Activated T-helper 1 cell treated with anti-CD3 and anti-CD28 coated beads, Interleukin-12 subunit alpha, Interleukin-12 subunit beta, Interleukin-2, Interleukin-4 antibody, amounts not matched to agents 30 ng/mL and 10 ng/mL and 1 ng/mL, durations not matched to agents 14 hours and 24 hours and 36 hours (primary cell): ENCODE measurements at regions of chr12 and their contacts with region 1.

Region 1: DNA sequence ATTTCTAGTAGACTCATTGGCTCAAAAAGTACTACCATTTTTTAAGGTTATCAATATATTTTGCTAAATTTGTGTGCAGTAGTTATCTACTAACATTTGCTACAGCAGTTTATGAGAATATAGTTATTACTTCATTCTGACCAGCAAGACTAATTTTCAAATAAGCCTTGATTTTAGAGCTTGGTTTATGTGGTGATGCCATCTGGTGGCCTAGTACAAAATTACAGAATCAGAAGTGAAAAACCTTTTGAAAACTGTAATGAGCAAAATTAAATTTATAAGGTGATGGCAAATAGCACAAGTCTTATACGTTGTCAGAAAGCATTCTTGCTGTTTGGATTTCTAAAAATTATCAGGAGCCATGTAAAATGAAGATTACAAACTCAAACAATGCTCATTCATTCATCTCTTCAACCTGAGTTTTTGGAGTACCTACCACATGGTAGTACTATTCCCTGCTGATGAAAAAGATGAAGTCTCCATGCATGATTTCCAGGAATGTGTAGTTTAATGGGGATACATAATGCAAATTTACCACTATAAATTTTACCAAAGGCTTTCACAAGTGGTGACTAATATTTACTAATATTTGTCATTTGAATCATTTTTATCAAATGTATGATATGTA is 51.0 kb downstream of the MAGOHB start:
- DNase-seq: no peak
- H3K4me3 Mint-ChIP-seq: no peak overlapping the region
- H3K27ac Mint-ChIP-seq: no peak overlapping the region
- H3K4me1 Mint-ChIP-seq: peaks cover 4% of the 10 kb centered on the region
- H3K27me3 Mint-ChIP-seq: peaks cover 38% of the 10 kb centered on the region

Region 2: DNA sequence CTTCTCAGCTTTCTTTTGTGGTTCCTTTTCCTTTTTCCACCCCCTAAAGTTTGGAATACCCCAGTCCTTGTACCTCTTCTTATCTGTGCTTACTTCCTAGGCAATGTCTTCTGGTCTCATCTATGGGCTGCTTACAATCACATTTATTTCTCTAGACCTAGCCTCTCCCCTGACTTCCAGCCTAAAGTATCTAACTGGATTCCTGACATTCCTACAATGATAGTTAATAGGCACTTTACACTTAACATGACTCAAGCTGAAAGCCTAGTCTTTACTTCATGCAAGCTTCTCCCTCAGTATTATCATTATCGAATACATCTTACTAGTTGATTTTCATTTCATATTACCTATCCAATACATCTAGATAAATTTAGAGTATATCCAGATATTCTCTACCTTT is 850.8 kb before region 1 on chr12:
- intact Hi-C with region 1: no loop called
- DNase-seq: no peak
- H3K4me3 Mint-ChIP-seq: no peak overlapping the region
- H3K27ac Mint-ChIP-seq: no peak overlapping the region
- H3K4me1 Mint-ChIP-seq: peaks cover 42% of the 10 kb centered on the region
- H3K27me3 Mint-ChIP-seq: no peaks in the 10 kb centered on the region

Region 3: GRCh38 chr12:10331642-10332239 is 230.7 kb before region 1 on chr12:
- intact Hi-C with region 1: loop called (anchors 1 kb)
- DNase-seq: no peak
- H3K4me3 Mint-ChIP-seq: no peak overlapping the region
- H3K27ac Mint-ChIP-seq: no peak overlapping the region
- H3K4me1 Mint-ChIP-seq: peaks cover 5% of the 10 kb centered on the region
- H3K27me3 Mint-ChIP-seq: peaks cover 20% of the 10 kb centered on the region

Region 4: DNA sequence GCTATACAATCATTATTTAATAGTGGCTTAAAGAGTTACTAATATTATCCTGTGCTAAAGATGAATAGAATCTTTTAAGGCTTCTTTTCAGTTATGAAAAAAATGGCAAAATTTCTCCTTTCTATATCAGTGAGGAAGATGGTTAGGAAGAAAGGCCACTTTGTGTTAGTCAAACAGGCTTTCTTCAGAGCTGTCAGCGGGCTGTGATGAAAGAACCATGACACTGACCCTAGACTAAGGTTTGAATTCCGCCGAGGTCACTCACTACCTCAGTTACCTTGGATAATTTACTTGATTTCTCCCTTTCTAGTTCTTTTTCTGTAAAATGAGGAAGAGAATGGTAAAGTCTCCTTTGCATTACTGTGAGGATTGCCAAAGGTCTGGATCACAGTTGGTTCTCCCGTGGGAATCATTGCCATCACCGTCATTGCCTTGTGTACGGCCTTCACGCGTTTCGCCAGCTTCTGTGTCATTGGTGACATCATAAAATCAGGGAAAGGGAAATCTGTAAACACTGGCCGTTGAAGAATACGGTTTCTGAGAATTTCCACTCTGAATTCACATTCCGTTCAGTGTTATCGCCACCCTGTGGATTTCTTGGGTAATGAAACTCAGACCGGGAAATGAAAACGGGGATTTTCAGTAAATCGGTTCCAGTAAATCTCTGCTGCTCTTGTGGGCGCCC is 187.4 kb after region 1 on chr12:
- intact Hi-C with region 1: loop called (anchors 1 kb)
- DNase-seq: peak; percentile 66
- H3K4me3 Mint-ChIP-seq: peak overlapping the region; percentile 62
- H3K27ac Mint-ChIP-seq: peak overlapping the region; percentile 34
- H3K4me1 Mint-ChIP-seq: peaks cover 36% of the 10 kb centered on the region
- H3K27me3 Mint-ChIP-seq: peaks cover 24% of the 10 kb centered on the region